ENCODE measurements at regions of chr2 and their contacts with region 1.

Region 1: GRCh38 chr2:190511104-190511503 is 23.4 kb downstream of the NEMP2 start:
- DNase-seq: no peak
- ATAC-seq: no peak
- H3K4me3 ChIP-seq: no peak overlapping the region
- H3K27ac ChIP-seq: no peak overlapping the region
- H3K4me1 ChIP-seq: no peaks in the 10 kb centered on the region
- H3K27me3 ChIP-seq: no peaks in the 10 kb centered on the region
- CTCF ChIP-seq: peak; percentile 39; the same call in 1 of the 2 replicates

Region 2: GRCh38 chr2:190763901-190764514 is 252.9 kb after region 1 on chr2:
- CTCF ChIA-PET with region 1: no interaction called
- POLR2A ChIA-PET with region 1: interaction called, 11 read pairs
- in situ Hi-C with region 1: no loop called
- intact Hi-C with region 1: no loop called
- DNase-seq: no peak
- ATAC-seq: no peak
- H3K4me3 ChIP-seq: no peak overlapping the region
- H3K27ac ChIP-seq: no peak overlapping the region
- H3K4me1 ChIP-seq: no peaks in the 10 kb centered on the region
- H3K27me3 ChIP-seq: no peaks in the 10 kb centered on the region; the same call in 1 of the 2 replicates
- CTCF ChIP-seq: no peak

Region 3: DNA sequence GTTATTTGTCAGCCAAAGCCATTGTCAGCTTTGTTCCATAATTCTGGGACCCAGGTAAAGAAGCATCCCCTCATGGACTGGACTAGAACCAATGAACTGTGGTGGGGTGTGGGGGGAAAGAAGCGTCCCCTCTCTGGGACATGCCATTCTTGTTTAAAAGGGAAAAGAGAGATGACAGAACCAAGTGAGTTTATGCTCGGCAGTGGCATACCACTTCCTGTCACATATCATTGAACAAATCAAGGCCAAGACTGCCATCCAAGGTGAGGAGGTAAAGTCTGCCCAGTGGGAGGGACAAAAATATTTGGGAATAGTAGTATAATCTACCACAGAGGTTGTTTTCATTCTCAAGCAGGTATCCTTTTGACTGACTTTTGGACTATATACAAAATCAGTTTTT is 364.8 kb after region 1 on chr2:
- CTCF ChIA-PET with region 1: no interaction called
- POLR2A ChIA-PET with region 1: no interaction called
- in situ Hi-C with region 1: no loop called
- intact Hi-C with region 1: no loop called
- DNase-seq: no peak
- ATAC-seq: no peak
- H3K4me3 ChIP-seq: no peak overlapping the region
- H3K27ac ChIP-seq: no peak overlapping the region
- H3K4me1 ChIP-seq: peaks cover 5% of the 10 kb centered on the region; the same call in 1 of the 2 replicates
- H3K27me3 ChIP-seq: no peaks in the 10 kb centered on the region; the same call in 1 of the 2 replicates
- CTCF ChIP-seq: no peak

Measured in Panc1 (cell line).